Heart right ventricle (tissue), 16 donors: ENCODE measurements at regions of chr17 and their contacts with region 1.

Region 1: GRCh38 chr17:58232707-58233156 is 5.7 kb upstream of the LPO start:
- DNase-seq: no peak
- ATAC-seq: peak in 5 of 8 donors; percentile 24 to 69 (median 51)
- H3K4me3 ChIP-seq: peak overlapping the region in 1 of 10 donors; percentile 4
- H3K27ac ChIP-seq: peak overlapping the region in 1 of 10 donors; percentile 24
- H3K4me1 ChIP-seq: peaks cover 0 to 19% (median 0%) of the 10 kb centered on the region in 9 donors
- H3K27me3 ChIP-seq: peaks cover 0 to 82% (median 55%) of the 10 kb centered on the region in 7 donors
- CTCF ChIP-seq: no peak

Region 2: GRCh38 chr17:58156839-58157803 is 75.6 kb before region 1 on chr17:
- intact Hi-C with region 1: no loop called
- DNase-seq: peak in 1 of 2 donors; percentile 37
- ATAC-seq: peak; percentile 51 to 87 (median 71)
- H3K4me3 ChIP-seq: peak overlapping the region; percentile 12 to 62 (median 52)
- H3K27ac ChIP-seq: peak overlapping the region in 2 of 10 donors; percentile 6 to 77
- H3K4me1 ChIP-seq: peaks cover 0 to 27% (median 12%) of the 10 kb centered on the region in 9 donors
- H3K27me3 ChIP-seq: peaks cover 0 to 84% (median 57%) of the 10 kb centered on the region in 7 donors
- CTCF ChIP-seq: no peak

Region 3: GRCh38 chr17:58289869-58290268 is 57.1 kb after region 1 on chr17:
- intact Hi-C with region 1: loop called in 1 of 10 experiments (anchors 10 kb)
- DNase-seq: no peak
- ATAC-seq: no peak
- H3K4me3 ChIP-seq: no peak overlapping the region
- H3K27ac ChIP-seq: no peak overlapping the region
- H3K4me1 ChIP-seq: no peaks in the 10 kb centered on the region
- H3K27me3 ChIP-seq: peaks cover 0 to 75% (median 34%) of the 10 kb centered on the region in 7 donors
- CTCF ChIP-seq: no peak